Ascending aorta (tissue), 2 donors: ENCODE measurements at regions of chr9 and their contacts with region 1.

Region 1: GRCh38 chr9:97921959-97922724 is at the start of gene TRMO:
- DNase-seq: peak; percentile 93 to 99
- H3K4me3 ChIP-seq: peak within 1 kb of the TSS; percentile 58 to 64
- H3K27ac ChIP-seq: peak within 1 kb of the TSS; percentile 92 to 94
- H3K4me1 ChIP-seq: peaks cover 3 to 19% of the 10 kb centered on the region in 2 donors
- H3K27me3 ChIP-seq: no peaks in the 10 kb centered on the region
- CTCF ChIP-seq: peak; percentile 29 to 62 (median 30)
- total RNA-seq, gene TRMO: 24.8 TPM

Region 2: DNA sequence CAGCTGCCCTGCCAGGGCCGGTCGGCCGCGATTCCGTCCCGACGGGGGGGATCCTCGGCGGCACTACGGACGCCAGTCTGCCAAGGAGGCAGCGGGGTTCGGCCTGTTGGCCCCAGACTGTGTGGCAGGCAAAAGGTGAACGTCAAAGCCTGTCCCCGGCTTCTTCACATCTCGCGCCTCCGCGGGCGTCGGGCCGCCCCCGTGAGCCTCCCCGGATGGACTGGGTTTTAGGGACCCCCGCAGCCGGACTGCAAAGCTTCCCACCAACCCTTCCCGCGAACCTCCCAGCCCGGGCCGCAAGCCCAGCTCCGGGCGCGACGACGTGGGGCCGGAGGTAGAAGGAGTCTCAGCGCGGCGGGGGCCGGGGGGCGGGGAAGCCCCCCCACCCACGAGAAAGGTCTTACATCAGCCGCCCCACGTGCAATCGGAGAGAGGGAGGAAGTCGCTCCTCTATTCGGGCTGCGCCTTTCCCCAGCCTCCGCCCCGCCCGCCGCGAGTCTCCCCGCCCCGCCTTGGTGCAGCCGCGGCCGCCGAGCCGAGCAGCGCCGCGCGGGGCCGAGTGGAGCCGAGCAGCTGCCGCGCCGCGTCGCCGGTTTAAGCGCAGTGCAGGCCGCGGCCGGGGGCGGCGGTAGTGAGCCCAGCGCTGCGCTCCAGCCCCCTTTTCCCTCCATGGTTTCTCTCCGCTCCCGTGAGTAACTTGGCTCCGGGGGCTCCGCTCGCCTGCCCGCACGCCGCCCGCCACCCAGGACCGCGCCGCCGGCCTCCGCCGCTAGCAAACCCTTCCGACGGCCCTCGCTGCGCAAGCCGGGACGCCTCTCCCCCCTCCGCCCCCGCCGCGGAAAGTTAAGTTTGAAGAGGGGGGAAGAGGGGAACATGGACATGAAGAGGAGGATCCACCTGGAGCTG is 60.8 kb after region 1 on chr9 and contains the start of gene ANP32B:
- intact Hi-C with region 1: loop called (anchors 1 kb)
- DNase-seq: peak; percentile 63 to 95
- H3K4me3 ChIP-seq: peak within 1 kb of the TSS; percentile 86 to 91
- H3K27ac ChIP-seq: peak within 1 kb of the TSS; percentile 97 to 99
- H3K4me1 ChIP-seq: peaks cover 7 to 17% of the 10 kb centered on the region in 2 donors
- H3K27me3 ChIP-seq: no peaks in the 10 kb centered on the region
- CTCF ChIP-seq: peak; percentile 65 to 98 (median 71)
- total RNA-seq, gene ANP32B: 13.9 TPM

Region 3: GRCh38 chr9:98056269-98057137 is 134.4 kb after region 1 on chr9 and contains the start of gene NANS:
- intact Hi-C with region 1: loop called (anchors 2 kb)
- DNase-seq: peak; percentile 80 to 96
- H3K4me3 ChIP-seq: peak within 1 kb of the TSS; percentile 86 to 96
- H3K27ac ChIP-seq: peak within 1 kb of the TSS; percentile 95 to 98
- H3K4me1 ChIP-seq: peaks cover 0 to 10% of the 10 kb centered on the region in 2 donors
- H3K27me3 ChIP-seq: no peaks in the 10 kb centered on the region
- CTCF ChIP-seq: no peak
- total RNA-seq, gene NANS: 40.7 TPM

Region 4: DNA sequence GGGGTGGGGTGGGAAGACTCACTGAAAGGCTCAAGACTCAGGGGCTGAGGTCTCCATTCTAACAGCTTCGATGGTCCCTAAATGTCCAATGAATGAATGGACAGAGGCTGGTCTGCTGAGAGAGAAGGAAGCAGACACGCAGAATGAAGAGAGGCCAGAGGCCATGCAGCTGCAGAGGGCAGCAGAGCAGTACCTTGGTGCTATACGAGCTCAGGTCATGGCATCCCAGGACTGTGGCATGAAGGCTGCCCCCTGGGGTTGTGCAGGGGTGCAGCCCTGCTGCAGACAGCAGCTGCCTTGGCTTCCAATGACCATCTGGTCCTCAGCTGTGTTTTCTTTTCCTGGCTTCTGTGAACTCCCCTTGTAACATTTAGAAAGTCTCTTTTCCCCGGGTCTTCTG is 285.5 kb after region 1 on chr9:
- intact Hi-C with region 1: loop called (anchors 5 kb)
- DNase-seq: no peak
- H3K4me3 ChIP-seq: no peak overlapping the region
- H3K27ac ChIP-seq: no peak overlapping the region
- H3K4me1 ChIP-seq: no peaks in the 10 kb centered on the region
- H3K27me3 ChIP-seq: no peaks in the 10 kb centered on the region
- CTCF ChIP-seq: no peak

Region 5: GRCh38 chr9:98263482-98264357 is 341.6 kb after region 1 on chr9:
- intact Hi-C with region 1: loop called (anchors 1 kb)
- DNase-seq: peak in 1 of 2 donors; percentile 83
- H3K4me3 ChIP-seq: no peak overlapping the region
- H3K27ac ChIP-seq: no peak overlapping the region
- H3K4me1 ChIP-seq: no peaks in the 10 kb centered on the region
- H3K27me3 ChIP-seq: no peaks in the 10 kb centered on the region
- CTCF ChIP-seq: peak; percentile 80 to 91 (median 89)

Region 6: GRCh38 chr9:99104459-99105151 is 1182.5 kb after region 1 on chr9 and contains the start of gene TGFBR1:
- intact Hi-C with region 1: loop called (anchors 5 kb)
- DNase-seq: peak; percentile 72 to 97
- H3K4me3 ChIP-seq: peak within 1 kb of the TSS; percentile 82 to 87
- H3K27ac ChIP-seq: peak within 1 kb of the TSS; percentile 92 to 95
- H3K4me1 ChIP-seq: peaks cover 0 to 34% of the 10 kb centered on the region in 2 donors
- H3K27me3 ChIP-seq: no peaks in the 10 kb centered on the region
- CTCF ChIP-seq: no peak
- total RNA-seq, gene TGFBR1: 13.9 TPM